ENCODE measurements at regions of chr10 and their contacts with region 1.

Region 1: GRCh38 chr10:89701238-89702120 is at the start of gene KIF20B:
- DNase-seq: peak; percentile 96
- ATAC-seq: peak; percentile 100
- total RNA-seq, gene KIF20B: 1.6 to 4.0 TPM

Region 2: DNA sequence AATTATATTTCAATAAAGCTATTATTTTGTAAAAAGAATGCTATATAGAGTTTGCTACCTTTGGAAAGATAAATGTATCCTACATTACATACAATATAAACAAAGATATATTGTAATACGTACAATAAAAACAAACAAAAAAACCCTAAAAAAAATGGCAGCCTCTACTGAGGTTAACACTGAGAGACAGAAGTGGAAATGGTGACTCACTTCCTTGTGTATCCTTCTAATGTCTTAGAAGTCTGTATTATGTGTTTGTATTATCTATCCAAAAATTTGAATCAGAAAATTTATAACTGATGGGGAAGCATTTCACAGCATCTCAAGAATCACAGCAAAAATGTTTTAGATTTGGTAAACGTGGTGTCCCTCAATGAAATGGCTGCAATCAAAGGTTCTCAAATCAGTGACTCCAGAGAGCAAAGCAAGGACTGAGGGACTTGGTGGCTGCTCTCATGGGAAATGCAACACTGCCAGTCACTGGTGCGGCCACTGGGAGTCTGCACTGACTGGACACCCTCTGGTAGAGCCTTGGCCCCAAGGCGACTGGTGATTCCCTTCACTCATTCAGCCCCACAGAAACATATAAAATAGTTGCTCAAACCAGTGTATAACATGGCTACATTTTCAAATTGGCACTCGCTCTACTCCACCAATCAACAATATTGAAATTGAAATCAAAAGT is 110.2 kb before region 1 on chr10:
- intact Hi-C with region 1: loop called in 1 of 2 experiments (anchors 10 kb)
- DNase-seq: no peak
- ATAC-seq: peak; percentile 62 to 66